Gastrocnemius medialis (tissue), 4 donors: ENCODE measurements at regions of chr4 and their contacts with region 1.

Region 1: GRCh38 chr4:41957634-41958033 is 22.4 kb downstream of the TMEM33 start:
- DNase-seq: no peak
- ATAC-seq: no peak
- H3K4me3 ChIP-seq: no peak overlapping the region
- H3K27ac ChIP-seq: no peak overlapping the region
- H3K4me1 ChIP-seq: no peaks in the 10 kb centered on the region
- H3K27me3 ChIP-seq: no peaks in the 10 kb centered on the region
- CTCF ChIP-seq: peak in 3 of 5 experiments; percentile 6 to 29 (median 10)
- POLR2A ChIP-seq: no peak

Region 2: GRCh38 chr4:41160012-41160789 is 797.4 kb before region 1 on chr4:
- in situ Hi-C with region 1: no loop called
- intact Hi-C with region 1: no loop called
- DNase-seq: no peak
- ATAC-seq: no peak
- H3K4me3 ChIP-seq: no peak overlapping the region
- H3K27ac ChIP-seq: peak overlapping the region in 3 of 4 donors; percentile 21 to 23 (median 22)
- H3K4me1 ChIP-seq: peaks cover 2 to 9% of the 10 kb centered on the region in 2 donors
- H3K27me3 ChIP-seq: no peaks in the 10 kb centered on the region
- CTCF ChIP-seq: no peak
- POLR2A ChIP-seq: no peak

Region 3: GRCh38 chr4:41509451-41509866 is 448.2 kb before region 1 on chr4:
- in situ Hi-C with region 1: no loop called
- intact Hi-C with region 1: no loop called
- DNase-seq: no peak
- ATAC-seq: no peak
- H3K4me3 ChIP-seq: no peak overlapping the region
- H3K27ac ChIP-seq: no peak overlapping the region
- H3K4me1 ChIP-seq: peaks cover 11 to 16% of the 10 kb centered on the region in 2 donors
- H3K27me3 ChIP-seq: no peaks in the 10 kb centered on the region
- CTCF ChIP-seq: no peak
- POLR2A ChIP-seq: no peak

Region 4: GRCh38 chr4:42018451-42018850 is 60.8 kb after region 1 on chr4:
- in situ Hi-C with region 1: loop called in 1 of 4 experiments (anchors 10 kb)
- intact Hi-C with region 1: no loop called
- DNase-seq: no peak
- ATAC-seq: no peak
- H3K4me3 ChIP-seq: no peak overlapping the region
- H3K27ac ChIP-seq: no peak overlapping the region
- H3K4me1 ChIP-seq: peaks cover 0 to 15% of the 10 kb centered on the region in 2 donors
- H3K27me3 ChIP-seq: no peaks in the 10 kb centered on the region
- CTCF ChIP-seq: no peak
- POLR2A ChIP-seq: no peak

Region 5: DNA sequence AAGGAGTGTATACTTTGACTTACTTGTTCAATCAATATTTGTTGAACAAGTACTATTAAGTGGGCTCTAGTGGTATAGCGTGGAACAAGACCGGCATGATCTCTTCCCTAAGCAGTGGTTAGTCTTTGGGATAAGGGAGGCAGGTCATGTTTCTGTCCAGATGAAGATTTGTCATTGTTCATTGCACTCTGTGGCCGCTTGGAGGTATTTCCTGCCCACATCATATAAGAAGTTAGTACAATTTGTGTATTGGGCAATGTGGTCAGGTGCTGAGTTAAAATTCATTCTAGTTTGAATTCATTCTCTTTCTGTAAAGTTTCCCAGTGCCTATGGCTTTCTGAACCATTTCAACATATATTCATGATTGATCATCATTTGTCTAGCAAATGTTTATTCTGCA is 338.6 kb after region 1 on chr4:
- in situ Hi-C with region 1: no loop called
- intact Hi-C with region 1: no loop called
- DNase-seq: no peak
- ATAC-seq: no peak
- H3K4me3 ChIP-seq: no peak overlapping the region
- H3K27ac ChIP-seq: no peak overlapping the region
- H3K4me1 ChIP-seq: no peaks in the 10 kb centered on the region
- H3K27me3 ChIP-seq: no peaks in the 10 kb centered on the region
- CTCF ChIP-seq: no peak
- POLR2A ChIP-seq: no peak

Region 6: DNA sequence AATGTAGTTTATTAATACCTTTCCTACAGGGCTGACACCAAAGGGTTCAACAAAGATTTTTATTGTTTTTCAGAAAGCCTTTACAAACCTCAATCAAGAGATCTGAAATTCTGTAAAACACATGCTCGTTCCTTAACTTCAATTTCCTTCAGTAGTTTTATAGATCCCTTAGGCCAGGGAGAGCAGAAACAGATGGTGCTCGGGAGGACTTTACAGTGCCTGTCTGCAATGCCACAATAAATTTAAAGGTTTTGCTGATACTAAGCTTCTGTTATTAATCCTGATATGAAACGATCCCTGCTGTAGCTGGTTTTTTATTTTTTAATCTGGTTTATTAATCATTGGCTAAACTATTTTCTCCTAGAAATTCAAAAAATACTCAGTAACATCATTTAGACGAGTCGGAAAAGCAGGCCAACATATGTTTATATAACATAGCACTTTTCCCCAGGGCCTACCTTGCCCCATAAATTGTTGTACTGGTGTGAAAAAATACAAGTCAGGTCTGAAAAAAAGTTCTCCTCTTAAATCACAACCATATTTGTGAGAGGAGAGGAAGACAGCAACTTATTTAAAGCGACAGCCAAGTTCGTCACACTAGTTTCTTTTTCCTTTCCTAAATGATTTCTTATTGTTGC is 479.4 kb after region 1 on chr4:
- in situ Hi-C with region 1: no loop called
- intact Hi-C with region 1: no loop called
- DNase-seq: no peak
- ATAC-seq: no peak
- H3K4me3 ChIP-seq: no peak overlapping the region
- H3K27ac ChIP-seq: no peak overlapping the region
- H3K4me1 ChIP-seq: no peaks in the 10 kb centered on the region
- H3K27me3 ChIP-seq: no peaks in the 10 kb centered on the region
- CTCF ChIP-seq: no peak
- POLR2A ChIP-seq: no peak